ENCODE measurements at regions of chr4 and their contacts with region 1.

Region 1: GRCh38 chr4:52911684-52912294 is 49.7 kb downstream of the RASL11B start:
- DNase-seq: peak; percentile 52
- ATAC-seq: no peak
- H3K4me3 ChIP-seq: no peak overlapping the region
- H3K4me3 Mint-ChIP-seq: no peak overlapping the region
- H3K27ac ChIP-seq: no peak overlapping the region
- H3K27ac Mint-ChIP-seq: no peak overlapping the region
- H3K4me1 ChIP-seq: no peaks in the 10 kb centered on the region
- H3K4me1 Mint-ChIP-seq: no peaks in the 10 kb centered on the region
- H3K27me3 ChIP-seq: no peaks in the 10 kb centered on the region
- H3K27me3 Mint-ChIP-seq: no peaks in the 10 kb centered on the region
- CTCF ChIP-seq: peak; percentile 78

Region 2: DNA sequence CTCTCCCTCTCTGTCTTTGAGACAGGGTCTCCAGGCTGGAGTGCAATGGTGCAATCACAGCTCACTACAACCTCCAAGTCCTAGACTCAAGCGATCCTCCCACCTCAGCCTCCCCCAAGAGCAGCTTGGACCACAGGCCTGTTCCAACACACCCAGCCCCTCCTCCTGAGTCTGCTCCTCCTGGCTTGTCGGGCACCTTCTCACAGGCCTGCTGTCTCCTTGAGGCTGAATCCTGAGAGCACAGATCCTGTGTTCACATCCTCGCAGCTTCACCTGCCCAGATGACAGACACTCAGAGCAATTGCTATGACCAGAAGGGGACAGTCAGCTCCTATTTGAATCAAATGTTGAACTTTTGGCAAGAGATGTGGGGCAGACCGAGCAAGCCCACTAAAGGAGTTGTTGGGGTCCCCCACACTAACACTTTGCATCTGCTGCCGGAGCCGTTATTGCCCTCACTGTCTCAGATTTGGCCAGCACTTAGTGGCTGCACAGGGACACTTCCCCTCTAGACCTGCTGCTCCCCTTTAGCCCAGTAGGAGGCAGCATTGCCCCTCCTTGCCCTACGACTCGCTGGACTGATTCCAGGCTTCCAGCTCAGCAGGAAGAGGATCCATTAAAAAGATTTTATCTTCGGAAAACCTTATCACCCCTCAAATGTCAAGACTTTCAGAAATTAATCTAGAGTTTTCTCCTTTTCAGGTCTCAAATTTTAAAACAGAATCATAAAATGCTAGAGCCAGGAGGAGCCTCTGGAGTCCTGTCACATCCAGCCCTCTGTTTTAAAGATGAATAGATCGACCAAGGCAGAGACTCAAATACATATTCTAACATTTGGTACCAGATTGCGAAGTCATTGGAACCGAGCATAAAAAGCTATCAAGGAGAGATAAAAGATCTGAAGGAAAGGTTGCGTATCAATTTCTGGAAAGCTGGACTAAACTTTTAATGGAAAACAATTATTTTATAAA is 366.4 kb before region 1 on chr4:
- CTCF ChIA-PET with region 1: interaction called, 13 read pairs
- POLR2A ChIA-PET with region 1: no interaction called
- intact Hi-C with region 1: no loop called
- DNase-seq: peak; percentile 64
- ATAC-seq: peak; percentile 43
- H3K4me3 ChIP-seq: no peak overlapping the region
- H3K4me3 Mint-ChIP-seq: no peak overlapping the region
- H3K27ac ChIP-seq: no peak overlapping the region
- H3K27ac Mint-ChIP-seq: no peak overlapping the region
- H3K4me1 ChIP-seq: no peaks in the 10 kb centered on the region
- H3K4me1 Mint-ChIP-seq: no peaks in the 10 kb centered on the region
- H3K27me3 ChIP-seq: peaks cover 0 to 4% (median 0%) of the 10 kb centered on the region in 4 experiments
- H3K27me3 Mint-ChIP-seq: peaks cover 12% of the 10 kb centered on the region
- CTCF ChIP-seq: peak; percentile 88

Region 3: GRCh38 chr4:53039741-53040458 is 128.1 kb after region 1 on chr4:
- CTCF ChIA-PET with region 1: no interaction called
- POLR2A ChIA-PET with region 1: no interaction called
- intact Hi-C with region 1: no loop called
- DNase-seq: no peak
- ATAC-seq: no peak
- H3K4me3 ChIP-seq: no peak overlapping the region
- H3K4me3 Mint-ChIP-seq: no peak overlapping the region
- H3K27ac ChIP-seq: no peak overlapping the region
- H3K27ac Mint-ChIP-seq: no peak overlapping the region
- H3K4me1 ChIP-seq: no peaks in the 10 kb centered on the region
- H3K4me1 Mint-ChIP-seq: no peaks in the 10 kb centered on the region
- H3K27me3 ChIP-seq: no peaks in the 10 kb centered on the region
- H3K27me3 Mint-ChIP-seq: no peaks in the 10 kb centered on the region
- CTCF ChIP-seq: no peak